ENCODE measurements at regions of chr21 and their contacts with region 1.

Region 1: DNA sequence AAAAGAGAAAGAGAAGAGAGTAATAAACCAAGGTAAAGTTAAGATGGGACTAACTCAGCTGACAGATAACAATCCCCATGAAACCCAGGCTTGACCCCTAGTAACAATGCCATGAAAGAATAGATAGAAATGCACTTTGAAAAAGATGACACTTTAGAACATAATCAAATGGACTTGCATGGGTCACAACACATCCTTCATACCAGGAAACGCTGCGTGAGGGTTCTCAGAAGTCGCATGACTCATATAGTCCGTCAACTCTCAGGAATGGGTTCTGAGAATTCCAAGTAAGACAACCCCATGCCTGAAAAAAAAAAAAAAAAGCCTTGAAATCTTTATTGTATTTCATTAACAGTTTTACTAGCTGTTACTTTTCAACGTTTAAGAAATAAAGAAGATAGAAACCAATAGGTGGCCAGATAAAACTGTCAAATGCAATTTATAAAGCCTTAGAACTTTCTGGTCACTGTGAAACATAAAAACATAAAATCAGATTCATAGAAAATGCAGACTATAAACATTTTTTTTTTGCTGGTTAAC is 202.0 kb downstream of the NCAM2 start:
- DNase-seq: peak; percentile 11
- H3K4me3 Mint-ChIP-seq: peak overlapping the region; percentile 64
- H3K27ac Mint-ChIP-seq: peak overlapping the region; percentile 91
- H3K4me1 Mint-ChIP-seq: peaks cover 43% of the 10 kb centered on the region
- H3K27me3 Mint-ChIP-seq: no peaks in the 10 kb centered on the region

Region 2: DNA sequence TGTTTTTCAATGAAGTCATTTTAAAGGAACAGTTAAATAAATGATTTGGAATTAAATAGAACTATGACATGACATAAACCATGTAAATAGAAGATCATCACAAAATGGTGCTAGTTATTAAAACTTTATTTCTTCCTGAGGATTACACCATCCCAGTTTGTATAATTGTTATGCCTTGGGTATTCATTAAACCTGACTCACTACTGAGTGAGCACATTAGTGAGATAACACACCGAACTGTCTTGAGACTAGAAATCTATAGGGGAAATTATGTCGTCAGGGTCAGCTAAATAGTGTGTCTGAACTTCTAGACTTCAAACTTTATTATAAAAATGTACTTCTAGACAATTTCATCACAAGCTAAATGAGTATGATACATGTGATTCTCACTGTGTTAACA is 12.6 kb before region 1 on chr21:
- intact Hi-C with region 1: loop called (anchors 2 kb)
- DNase-seq: no peak
- H3K4me3 Mint-ChIP-seq: no peak overlapping the region
- H3K27ac Mint-ChIP-seq: no peak overlapping the region
- H3K4me1 Mint-ChIP-seq: peaks cover 5% of the 10 kb centered on the region
- H3K27me3 Mint-ChIP-seq: no peaks in the 10 kb centered on the region

Region 3: DNA sequence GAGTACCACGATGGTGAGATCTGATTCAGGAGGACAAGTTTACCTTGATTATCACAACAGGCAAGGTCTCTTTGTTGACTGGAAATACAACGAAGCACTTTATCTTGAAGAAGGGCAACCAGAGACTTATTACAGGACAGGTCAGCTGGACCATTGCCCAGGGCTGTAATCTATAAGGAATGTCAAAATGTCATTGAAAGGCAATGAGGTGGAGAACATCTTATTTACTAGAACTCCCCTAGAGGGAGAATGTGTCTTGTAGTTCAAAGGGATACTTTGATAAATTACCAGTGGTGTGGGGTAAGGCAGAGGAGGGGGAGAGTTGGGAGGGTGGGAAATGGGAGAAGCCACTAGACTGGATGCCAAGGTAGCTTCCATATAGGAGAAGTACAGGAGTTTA is 10.4 kb after region 1 on chr21:
- intact Hi-C with region 1: loop called (anchors 2 kb)
- DNase-seq: no peak
- H3K4me3 Mint-ChIP-seq: no peak overlapping the region
- H3K27ac Mint-ChIP-seq: no peak overlapping the region
- H3K4me1 Mint-ChIP-seq: no peaks in the 10 kb centered on the region
- H3K27me3 Mint-ChIP-seq: peaks cover 9% of the 10 kb centered on the region

Region 4: DNA sequence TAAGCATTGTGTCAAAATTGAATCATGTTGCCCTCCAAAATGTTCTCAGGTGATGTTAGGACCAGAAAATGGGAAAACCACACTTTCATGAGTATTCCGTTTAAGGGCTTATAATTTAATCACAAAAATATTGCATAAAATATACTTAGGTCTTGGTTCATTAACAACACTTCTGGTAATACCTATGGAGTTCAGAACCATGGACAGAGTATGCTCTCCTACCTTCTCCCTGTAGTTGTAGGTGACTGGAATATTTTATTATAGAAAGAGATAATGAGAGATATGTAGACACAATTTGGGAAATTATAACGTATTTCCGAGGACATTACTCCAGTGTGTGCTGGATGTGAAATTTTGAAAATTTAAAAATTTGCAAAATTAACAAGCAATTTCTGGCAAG is 30.5 kb after region 1 on chr21:
- intact Hi-C with region 1: no loop called
- DNase-seq: no peak
- H3K4me3 Mint-ChIP-seq: no peak overlapping the region
- H3K27ac Mint-ChIP-seq: no peak overlapping the region
- H3K4me1 Mint-ChIP-seq: no peaks in the 10 kb centered on the region
- H3K27me3 Mint-ChIP-seq: peaks cover 4% of the 10 kb centered on the region